ENCODE measurements at regions of chr5 and their contacts with region 1.

Region 1: DNA sequence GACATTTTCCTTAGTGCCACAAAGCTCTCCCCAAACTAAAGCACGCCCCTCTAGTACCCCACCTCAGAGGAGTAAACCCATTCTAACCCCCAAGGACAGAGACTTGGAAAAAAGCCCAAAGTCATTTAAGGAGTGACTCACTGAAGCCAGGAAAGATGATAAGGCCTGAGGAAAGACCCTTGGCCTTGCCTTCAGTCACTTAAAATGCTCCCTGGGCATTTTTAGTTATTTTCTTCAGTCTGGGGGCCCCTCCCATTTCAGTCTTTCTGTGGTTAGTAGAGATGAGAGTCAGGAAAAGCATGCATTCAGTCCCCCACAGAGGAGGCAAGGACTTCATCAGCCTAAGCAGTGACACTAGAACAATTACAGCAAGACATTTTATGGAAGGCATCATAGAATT is 13.7 kb upstream of the TLX3 start:
- DNase-seq: no peak
- H3K4me3 ChIP-seq: no peak overlapping the region
- H3K27ac ChIP-seq: no peak overlapping the region
- H3K4me1 ChIP-seq: peaks cover 0 to 2% (median 0%) of the 10 kb centered on the region in 4 experiments; a peak in 1 of 7 replicates
- H3K27me3 ChIP-seq: no peaks in the 10 kb centered on the region; a peak in 2 of 7 replicates
- CTCF ChIP-seq: no peak
- EP300 ChIP-seq: no peak
- POLR2A ChIP-seq: no peak
- RAD21 ChIP-seq: no peak

Region 2: GRCh38 chr5:171283753-171284152 is 11.5 kb before region 1 on chr5:
- CTCF ChIA-PET with region 1: interaction called, 11 read pairs
- POLR2A ChIA-PET with region 1: interaction called, 3 read pairs
- DNase-seq: no peak
- H3K4me3 ChIP-seq: no peak overlapping the region
- H3K27ac ChIP-seq: no peak overlapping the region
- H3K4me1 ChIP-seq: no peaks in the 10 kb centered on the region
- H3K27me3 ChIP-seq: no peaks in the 10 kb centered on the region
- CTCF ChIP-seq: no peak
- EP300 ChIP-seq: no peak
- POLR2A ChIP-seq: no peak
- RAD21 ChIP-seq: no peak

Measured in H1 (cell line).